ENCODE measurements at regions of chr14 and their contacts with region 1.

Region 1: DNA sequence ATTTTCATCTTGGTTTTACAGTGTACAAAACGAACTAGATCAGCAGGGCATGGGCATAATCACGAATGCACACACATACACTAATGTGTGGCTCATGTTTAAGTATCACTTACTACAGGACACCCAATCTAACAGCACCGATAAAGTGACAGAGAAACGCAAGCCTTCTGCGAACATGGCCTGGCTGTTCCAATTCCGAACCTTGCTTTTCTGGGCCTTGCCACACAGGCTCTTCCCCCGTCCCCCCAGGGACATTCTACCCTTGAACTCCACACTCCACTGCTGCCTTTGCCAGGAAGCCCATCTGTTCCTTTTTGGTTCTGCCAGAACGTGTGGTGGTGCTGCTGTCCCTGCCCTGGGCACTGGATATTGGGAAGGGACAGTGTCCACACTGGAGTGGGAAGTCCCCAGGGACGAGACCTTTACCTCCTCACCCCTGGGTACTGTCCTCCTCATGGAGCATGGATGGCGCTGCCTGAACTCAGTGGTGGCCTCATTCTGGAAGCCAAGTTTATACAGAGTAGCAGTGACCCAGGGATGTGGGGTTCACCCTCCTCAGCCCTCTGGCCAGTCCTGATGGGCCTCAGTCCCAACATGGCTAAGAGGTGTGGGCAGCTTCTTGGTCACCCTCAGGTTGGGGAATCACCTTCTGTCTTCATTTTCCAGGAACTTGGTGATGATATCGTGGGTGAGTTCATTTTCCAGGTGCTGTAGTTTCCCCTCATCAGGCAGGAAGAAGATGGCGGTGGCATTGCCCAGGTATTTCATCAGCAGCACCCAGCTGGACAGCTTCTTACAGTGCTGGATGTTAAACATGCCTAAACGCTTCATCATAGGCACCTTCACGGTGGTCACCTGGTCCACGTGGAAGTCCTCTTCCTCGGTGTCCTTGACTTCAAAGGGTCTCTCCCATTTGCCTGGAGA is 7.9 kb downstream of the SERPINA1 start:
- DNase-seq: no peak
- H3K4me3 ChIP-seq: no peak overlapping the region
- H3K27ac ChIP-seq: no peak overlapping the region
- H3K4me1 ChIP-seq: peaks cover 5% of the 10 kb centered on the region
- H3K27me3 ChIP-seq: no peaks in the 10 kb centered on the region
- CTCF ChIP-seq: no peak
- EP300 ChIP-seq: no peak
- POLR2A ChIP-seq: no peak

Region 2: DNA sequence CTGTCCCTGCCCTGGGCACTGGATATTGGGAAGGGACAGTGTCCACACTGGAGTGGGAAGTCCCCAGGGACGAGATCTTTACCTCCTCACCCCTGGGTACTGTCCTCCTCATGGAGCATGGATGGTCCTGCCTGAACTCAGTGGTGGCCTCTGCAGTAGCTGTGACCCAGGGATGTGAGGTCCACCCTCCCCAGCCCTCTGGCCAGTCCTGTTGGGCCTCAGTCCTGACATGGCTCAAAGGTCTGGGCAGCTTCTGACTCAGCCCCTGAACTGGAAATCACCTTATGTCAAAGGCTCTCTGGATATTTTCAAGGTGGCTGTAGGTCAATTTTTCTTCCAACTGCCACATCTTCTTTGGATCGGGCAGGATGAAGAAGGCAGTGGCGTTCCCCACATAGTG is 16.4 kb before region 1 on chr14:
- intact Hi-C with region 1: loop called in 1 of 4 experiments (anchors 1 kb)
- DNase-seq: no peak
- H3K4me3 ChIP-seq: no peak overlapping the region
- H3K27ac ChIP-seq: no peak overlapping the region
- H3K4me1 ChIP-seq: no peaks in the 10 kb centered on the region
- H3K27me3 ChIP-seq: no peaks in the 10 kb centered on the region
- CTCF ChIP-seq: no peak
- EP300 ChIP-seq: no peak
- POLR2A ChIP-seq: no peak

Region 3: DNA sequence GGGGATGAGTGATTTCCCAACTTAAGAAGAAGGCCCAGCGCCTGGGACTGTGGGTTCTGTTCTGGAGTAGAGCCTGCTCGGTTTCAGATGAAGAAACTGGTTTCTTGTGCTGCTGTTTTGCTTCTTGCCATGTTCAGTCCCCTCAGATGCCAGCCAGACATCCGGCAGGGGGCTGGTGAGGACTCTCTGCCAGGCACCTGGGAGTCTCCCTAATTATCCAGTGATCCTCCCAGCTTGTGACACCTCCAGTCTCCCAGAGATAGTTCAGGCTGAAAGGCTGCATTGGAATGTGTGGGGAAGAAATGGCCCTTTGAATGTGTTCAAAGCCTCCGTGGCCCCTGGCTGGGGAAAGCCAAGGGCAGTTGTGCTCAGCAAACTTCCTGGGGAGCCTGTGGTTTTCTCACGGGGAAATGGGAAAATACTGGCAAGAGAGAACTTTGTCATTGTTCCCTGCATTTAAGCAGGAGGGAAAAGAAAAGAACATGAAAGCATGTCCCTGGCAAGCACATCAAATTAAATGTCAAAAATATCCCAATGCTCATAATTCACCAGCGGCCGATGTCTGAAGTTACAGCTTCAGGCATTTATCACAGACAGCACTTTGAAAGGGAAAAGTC is 137.3 kb after region 1 on chr14:
- intact Hi-C with region 1: no loop called
- DNase-seq: no peak
- H3K4me3 ChIP-seq: no peak overlapping the region
- H3K27ac ChIP-seq: no peak overlapping the region
- H3K4me1 ChIP-seq: no peaks in the 10 kb centered on the region
- H3K27me3 ChIP-seq: no peaks in the 10 kb centered on the region
- CTCF ChIP-seq: no peak
- EP300 ChIP-seq: no peak
- POLR2A ChIP-seq: no peak

Region 4: GRCh38 chr14:95818581-95818980 is 1438.1 kb after region 1 on chr14:
- intact Hi-C with region 1: no loop called
- DNase-seq: no peak
- H3K4me3 ChIP-seq: no peak overlapping the region
- H3K27ac ChIP-seq: no peak overlapping the region
- H3K4me1 ChIP-seq: no peaks in the 10 kb centered on the region
- H3K27me3 ChIP-seq: no peaks in the 10 kb centered on the region
- CTCF ChIP-seq: no peak
- EP300 ChIP-seq: no peak
- POLR2A ChIP-seq: no peak

Measured in ovary (tissue), 10 donors.